AG04450 (cell line): ENCODE measurements at regions of chr2 and their contacts with region 1.

Region 1: GRCh38 chr2:118003396-118003824 is 10.5 kb downstream of the CCDC93 start:
- DNase-seq: peak; percentile 69
- H3K4me3 ChIP-seq: no peak overlapping the region
- H3K27ac ChIP-seq: no peak overlapping the region
- H3K27me3 ChIP-seq: no peaks in the 10 kb centered on the region
- CTCF ChIP-seq: peak; percentile 89

Region 2: DNA sequence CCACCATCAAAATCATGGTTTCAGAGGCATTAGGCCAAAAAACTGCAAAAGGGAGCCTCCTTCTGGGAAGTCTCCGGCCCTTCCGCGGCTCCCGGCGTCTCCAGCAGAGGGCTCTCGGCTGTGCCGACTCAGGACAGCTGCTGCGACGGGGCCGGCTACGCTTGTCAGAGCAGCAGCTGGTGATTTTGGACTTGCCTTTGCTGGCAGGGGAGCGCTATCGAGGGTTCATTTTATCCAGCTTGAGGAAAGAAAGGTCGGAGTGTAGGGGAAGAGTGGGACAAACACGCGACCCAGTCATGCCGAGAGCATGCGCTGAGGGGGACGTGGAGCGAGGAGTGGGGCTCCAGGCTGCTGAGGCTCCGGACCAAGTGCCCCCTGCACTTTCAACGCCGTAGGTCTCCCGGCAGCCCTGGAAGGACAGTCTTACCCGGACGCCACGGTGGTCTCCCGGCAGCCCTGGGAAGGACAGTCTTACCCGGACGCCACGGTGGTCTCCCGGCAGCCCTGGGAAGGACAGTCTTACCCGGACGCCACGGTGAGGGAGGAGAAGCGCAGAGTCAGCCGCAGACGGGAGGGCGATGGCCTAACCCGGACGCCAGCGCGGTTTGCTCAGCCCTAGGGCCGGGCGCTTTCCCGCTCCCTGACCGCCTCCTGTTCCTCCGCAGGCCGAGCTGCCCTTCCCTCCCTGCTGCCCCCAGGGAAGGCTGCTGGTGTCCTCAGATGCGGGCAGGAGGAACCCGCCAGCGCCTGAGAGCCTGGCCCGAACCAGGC is 167.2 kb before region 1 on chr2:
- CTCF ChIA-PET with region 1: interaction called, 319 read pairs
- POLR2A ChIA-PET with region 1: interaction called, 10 read pairs
- DNase-seq: peak; percentile 59
- H3K4me3 ChIP-seq: peak overlapping the region; percentile 57
- H3K27ac ChIP-seq: no peak overlapping the region
- H3K27me3 ChIP-seq: no peaks in the 10 kb centered on the region
- CTCF ChIP-seq: peak; percentile 97

Region 3: DNA sequence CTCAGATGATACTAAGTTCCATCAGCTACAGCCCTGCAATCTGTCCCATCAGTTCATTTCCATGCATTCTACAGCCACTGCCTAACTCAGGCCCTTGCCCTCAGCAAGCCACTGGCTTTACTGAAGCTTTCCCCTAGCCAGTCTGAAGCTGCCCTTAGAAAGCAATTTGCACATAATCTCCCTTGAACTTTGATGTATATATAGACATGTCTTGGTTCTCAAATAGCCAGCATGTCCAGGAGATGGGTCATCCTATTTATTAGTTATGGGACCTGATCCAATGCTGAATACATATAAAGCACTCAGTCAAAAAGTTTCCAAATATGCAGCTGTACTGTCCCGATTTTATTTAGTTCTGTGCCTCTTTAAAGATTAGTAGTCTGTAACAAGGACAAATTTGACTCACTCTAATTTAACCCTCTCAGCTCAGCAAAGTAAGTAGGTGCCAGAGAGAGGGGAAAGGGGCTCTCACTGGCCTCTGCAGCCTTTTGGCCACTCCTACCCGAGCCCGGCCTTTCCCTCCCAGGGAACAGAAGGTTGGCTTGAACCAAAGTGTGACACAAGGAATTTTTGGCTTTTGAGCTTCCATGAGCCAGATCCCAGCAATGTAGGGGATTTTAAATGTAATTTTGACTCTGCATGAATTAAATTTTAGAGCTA is 60.3 kb before region 1 on chr2:
- CTCF ChIA-PET with region 1: interaction called, 40 read pairs
- POLR2A ChIA-PET with region 1: interaction called, 4 read pairs
- DNase-seq: peak; percentile 45
- H3K4me3 ChIP-seq: no peak overlapping the region
- H3K27ac ChIP-seq: peak overlapping the region; percentile 39
- H3K27me3 ChIP-seq: no peaks in the 10 kb centered on the region
- CTCF ChIP-seq: no peak

Region 4: GRCh38 chr2:117972425-117973138 is 30.8 kb before region 1 on chr2:
- CTCF ChIA-PET with region 1: interaction called, 78 read pairs
- POLR2A ChIA-PET with region 1: interaction called, 3 read pairs
- DNase-seq: no peak
- H3K4me3 ChIP-seq: no peak overlapping the region
- H3K27ac ChIP-seq: no peak overlapping the region
- H3K27me3 ChIP-seq: no peaks in the 10 kb centered on the region
- CTCF ChIP-seq: no peak

Region 5: DNA sequence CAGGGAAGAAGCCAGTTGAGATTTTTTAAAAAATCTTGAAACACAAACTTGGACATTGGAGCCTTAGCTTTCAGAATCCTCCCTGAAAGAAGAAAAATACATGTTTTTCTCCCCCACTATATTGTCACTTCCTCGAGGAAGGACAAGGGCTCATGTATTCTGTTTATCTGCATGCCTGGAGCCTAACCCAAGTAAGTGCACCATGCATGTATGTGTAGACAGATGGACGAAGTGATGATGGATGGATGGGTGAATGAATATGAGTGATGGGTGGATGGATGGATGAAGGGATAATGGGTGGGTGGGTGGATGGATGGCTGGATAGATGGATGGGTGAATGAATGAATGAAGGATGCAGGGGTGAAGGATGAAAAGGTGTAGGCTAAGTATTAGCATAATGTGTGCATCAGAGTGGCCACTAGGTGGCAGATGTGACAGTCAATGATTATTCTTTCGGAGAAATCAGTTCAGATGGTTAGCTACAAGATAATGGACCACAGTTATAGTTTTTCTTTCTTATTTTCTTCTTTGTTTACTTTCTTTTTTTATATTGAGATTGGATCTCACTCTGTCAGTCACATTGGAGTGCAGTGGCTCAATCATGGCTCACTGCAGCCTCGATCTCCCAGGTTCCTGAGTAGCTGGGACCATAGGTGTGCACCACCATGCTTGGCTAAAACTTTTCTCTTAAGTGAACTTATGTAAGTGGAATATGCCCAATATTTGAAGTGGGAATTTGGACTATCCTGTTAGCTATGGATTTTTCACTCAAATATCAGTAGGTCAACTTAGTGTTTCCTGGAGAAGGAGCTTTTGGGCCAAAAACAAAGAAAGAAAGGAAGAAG is 29.0 kb after region 1 on chr2:
- CTCF ChIA-PET with region 1: interaction called, 13 read pairs
- POLR2A ChIA-PET with region 1: no interaction called
- DNase-seq: no peak
- H3K4me3 ChIP-seq: no peak overlapping the region
- H3K27ac ChIP-seq: no peak overlapping the region
- H3K27me3 ChIP-seq: peaks cover 10% of the 10 kb centered on the region
- CTCF ChIP-seq: peak; percentile 77